Caco-2 (cell line): ENCODE measurements at regions of chr5 and their contacts with region 1.

Region 1: DNA sequence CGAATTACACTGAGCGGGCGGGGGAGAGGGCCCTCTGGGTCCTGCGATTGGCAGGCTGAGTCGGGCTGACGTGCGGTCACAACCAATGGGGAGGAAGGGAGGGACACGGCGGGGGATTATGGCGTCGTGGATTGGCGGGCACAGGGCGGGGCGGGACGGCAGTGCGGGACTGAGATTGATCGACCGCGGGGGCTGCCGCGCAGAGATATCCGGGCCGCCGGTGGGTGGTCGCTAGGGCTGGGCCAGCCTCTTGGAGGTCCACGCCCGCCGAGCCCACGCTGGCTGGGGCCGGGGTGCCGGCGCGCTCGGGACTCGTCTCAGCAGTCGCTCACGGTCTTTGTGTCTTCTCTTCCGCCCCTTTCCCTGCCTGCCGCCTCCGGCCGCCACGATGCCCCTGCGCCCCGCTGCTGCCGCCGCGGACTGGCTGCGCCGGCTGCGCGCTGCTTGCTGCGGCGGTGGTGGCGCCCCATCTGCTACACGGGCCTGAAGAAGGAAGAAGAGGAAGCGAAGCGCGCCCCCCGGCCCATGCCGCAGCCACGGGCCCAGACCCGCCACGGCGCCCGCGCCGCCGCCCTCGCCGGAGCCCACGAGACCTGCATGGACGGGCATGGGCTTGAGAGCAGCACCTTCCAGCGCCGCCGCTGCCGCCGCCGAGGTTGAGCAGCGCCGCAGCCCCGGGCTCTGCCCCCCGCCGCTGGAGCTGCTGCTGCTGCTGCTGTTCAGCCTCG is at the start of gene RGMB:
- DNase-seq: peak; percentile 98 to 99
- H3K4me3 ChIP-seq: peak within 1 kb of the TSS; percentile 95
- H3K4me3 Mint-ChIP-seq: peak within 1 kb of the TSS; percentile 82
- H3K27ac Mint-ChIP-seq: peak within 1 kb of the TSS; percentile 87
- H3K4me1 ChIP-seq: peaks cover 14% of the 10 kb centered on the region
- H3K4me1 Mint-ChIP-seq: peaks cover 9% of the 10 kb centered on the region
- H3K27me3 ChIP-seq: no peaks in the 10 kb centered on the region
- H3K27me3 Mint-ChIP-seq: no peaks in the 10 kb centered on the region
- CTCF ChIP-seq: no peak
- total RNA-seq, gene RGMB: 16.4 and 17.8 TPM in 2 replicates

Region 2: DNA sequence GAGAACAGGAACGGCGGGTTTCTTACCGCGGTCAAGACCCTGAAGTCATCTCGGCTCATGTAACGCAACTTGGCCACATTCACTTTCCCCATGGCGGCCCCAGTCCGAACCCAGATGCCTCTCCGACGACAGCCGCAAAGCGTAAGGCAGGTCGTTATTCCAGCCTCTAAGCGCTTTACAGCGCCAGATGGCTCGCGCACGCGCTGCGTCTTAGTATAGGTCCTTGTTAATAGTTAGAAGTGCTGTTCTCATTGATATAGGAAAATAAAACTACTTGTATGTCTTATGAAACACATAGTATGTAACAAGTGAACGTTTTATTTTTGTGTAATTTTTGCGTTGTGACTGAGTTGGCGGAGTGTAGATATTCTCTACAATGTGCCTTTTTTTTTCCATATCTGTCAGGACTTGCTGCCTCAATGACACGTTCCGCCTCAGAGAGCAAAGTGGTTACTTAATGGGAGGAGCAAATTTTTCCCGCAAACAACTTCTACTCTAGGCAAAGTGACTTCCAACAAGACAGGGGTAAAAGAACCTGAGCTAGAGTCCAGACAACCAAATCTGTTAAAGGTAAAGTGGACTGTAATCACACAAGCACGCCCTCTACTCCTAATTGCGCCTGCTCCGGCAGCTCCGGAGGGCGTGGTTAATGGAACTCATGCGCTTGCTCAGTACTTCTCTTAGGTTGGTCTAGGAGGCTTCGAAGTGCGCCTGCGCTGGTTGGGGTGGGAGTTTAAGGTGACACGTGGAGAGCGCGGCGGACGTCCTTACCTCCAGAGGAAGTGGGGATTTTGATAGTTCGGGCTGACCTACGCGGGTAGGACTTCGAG is 1590.3 kb before region 1 on chr5 and contains the start of gene RIOK2:
- CTCF ChIA-PET with region 1: no interaction called
- POLR2A ChIA-PET with region 1: no interaction called
- intact Hi-C with region 1: loop called (anchors 5 kb)
- DNase-seq: peak; percentile 96 to 98
- H3K4me3 ChIP-seq: peak within 1 kb of the TSS; percentile 87
- H3K4me3 Mint-ChIP-seq: peak within 1 kb of the TSS; percentile 74
- H3K27ac Mint-ChIP-seq: peak within 1 kb of the TSS; percentile 98
- H3K4me1 ChIP-seq: 0 out of 2 replicates have a peak, but pooled peaks cover 13% of the 10 kb centered on the region
- H3K4me1 Mint-ChIP-seq: peaks cover 25% of the 10 kb centered on the region
- H3K27me3 ChIP-seq: no peaks in the 10 kb centered on the region
- H3K27me3 Mint-ChIP-seq: no peaks in the 10 kb centered on the region
- CTCF ChIP-seq: no peak
- total RNA-seq, gene RIOK2: 36.3 and 38.7 TPM in 2 replicates

Region 3: DNA sequence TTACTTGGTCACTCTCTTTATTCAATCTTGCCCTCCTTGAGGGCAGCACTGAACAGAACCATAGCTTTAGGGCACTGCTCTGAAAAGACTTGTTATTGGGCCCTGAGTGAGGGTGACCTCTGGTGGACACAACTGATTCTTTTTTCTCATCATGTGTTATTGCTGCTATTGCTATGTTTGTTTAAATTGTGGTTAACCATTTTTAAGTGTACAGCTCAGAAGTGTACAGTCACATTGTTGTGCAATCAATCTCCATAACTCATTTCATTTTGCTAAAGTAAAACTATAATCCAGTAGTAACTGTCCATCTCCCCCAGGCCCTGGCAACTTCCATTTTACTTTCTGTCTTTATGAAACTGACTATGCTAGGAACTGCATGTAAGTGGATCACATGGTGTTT is 1239.5 kb before region 1 on chr5:
- CTCF ChIA-PET with region 1: interaction called, 3 read pairs
- POLR2A ChIA-PET with region 1: no interaction called
- intact Hi-C with region 1: loop called (anchors 5 kb)
- DNase-seq: peak; percentile 47 to 62
- H3K4me3 ChIP-seq: no peak overlapping the region
- H3K4me3 Mint-ChIP-seq: no peak overlapping the region
- H3K27ac Mint-ChIP-seq: no peak overlapping the region
- H3K4me1 ChIP-seq: no peaks in the 10 kb centered on the region
- H3K4me1 Mint-ChIP-seq: no peaks in the 10 kb centered on the region
- H3K27me3 ChIP-seq: no peaks in the 10 kb centered on the region
- H3K27me3 Mint-ChIP-seq: no peaks in the 10 kb centered on the region
- CTCF ChIP-seq: peak; percentile 65 to 72

Region 4: GRCh38 chr5:98428806-98429205 is 344.8 kb before region 1 on chr5:
- CTCF ChIA-PET with region 1: no interaction called
- POLR2A ChIA-PET with region 1: no interaction called
- intact Hi-C with region 1: no loop called
- DNase-seq: no peak
- H3K4me3 ChIP-seq: no peak overlapping the region
- H3K4me3 Mint-ChIP-seq: no peak overlapping the region
- H3K27ac Mint-ChIP-seq: no peak overlapping the region
- H3K4me1 ChIP-seq: no peaks in the 10 kb centered on the region
- H3K4me1 Mint-ChIP-seq: no peaks in the 10 kb centered on the region
- H3K27me3 ChIP-seq: no peaks in the 10 kb centered on the region
- H3K27me3 Mint-ChIP-seq: no peaks in the 10 kb centered on the region
- CTCF ChIP-seq: no peak

Region 5: DNA sequence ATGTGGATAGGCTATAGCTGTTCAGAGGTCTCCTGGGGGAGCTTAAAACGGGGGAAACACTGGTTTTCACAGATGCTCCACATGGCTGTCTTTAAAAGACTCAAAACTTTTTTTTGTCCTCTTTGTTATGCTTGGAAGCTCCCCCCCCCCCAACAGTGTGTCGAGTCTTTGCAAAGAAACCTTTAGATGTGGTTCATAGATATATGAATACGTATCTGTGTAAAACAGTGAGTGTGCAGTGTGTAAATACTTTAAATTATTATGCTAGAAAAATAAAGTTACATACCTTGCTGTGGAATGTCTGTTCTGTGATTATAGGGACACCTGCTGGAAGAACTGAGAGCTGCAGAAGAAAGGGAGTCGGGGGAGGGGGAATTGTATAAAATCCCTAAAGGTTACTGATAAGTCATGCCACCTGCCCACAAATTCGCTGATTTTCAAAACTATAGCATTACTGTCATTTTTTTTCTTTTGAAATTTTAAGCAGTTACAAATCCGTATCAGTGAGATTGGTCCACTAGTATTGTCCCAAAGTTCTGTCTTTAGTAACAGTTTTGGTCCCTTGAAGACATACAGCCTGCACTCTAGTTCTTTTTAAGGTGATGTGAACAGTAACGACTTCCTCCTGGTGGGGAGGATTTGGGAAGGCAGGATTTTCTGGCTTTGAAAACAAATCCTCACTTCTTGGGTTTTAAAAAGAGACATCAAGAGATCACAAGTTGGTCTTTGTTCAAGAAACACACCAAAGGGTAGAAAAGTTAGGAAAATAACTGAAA is 22.8 kb after region 1 on chr5:
- CTCF ChIA-PET with region 1: interaction called, 20 read pairs
- POLR2A ChIA-PET with region 1: interaction called, 3 read pairs
- intact Hi-C with region 1: loop called (anchors 1 kb)
- DNase-seq: peak; percentile 62 to 71
- H3K4me3 ChIP-seq: no peak overlapping the region
- H3K4me3 Mint-ChIP-seq: peak overlapping the region; percentile 17
- H3K27ac Mint-ChIP-seq: peak overlapping the region; percentile 62
- H3K4me1 ChIP-seq: no peaks in the 10 kb centered on the region
- H3K4me1 Mint-ChIP-seq: peaks cover 7% of the 10 kb centered on the region
- H3K27me3 ChIP-seq: no peaks in the 10 kb centered on the region
- H3K27me3 Mint-ChIP-seq: no peaks in the 10 kb centered on the region
- CTCF ChIP-seq: peak; percentile 65 to 86

Region 6: GRCh38 chr5:98928873-98929696 is 155.5 kb after region 1 on chr5 and contains the start of gene CHD1:
- CTCF ChIA-PET with region 1: no interaction called
- POLR2A ChIA-PET with region 1: no interaction called
- intact Hi-C with region 1: loop called (anchors 2 kb)
- DNase-seq: peak; percentile 96
- H3K4me3 ChIP-seq: peak within 1 kb of the TSS; percentile 83
- H3K4me3 Mint-ChIP-seq: peak within 1 kb of the TSS; percentile 79
- H3K27ac Mint-ChIP-seq: peak within 1 kb of the TSS; percentile 98
- H3K4me1 ChIP-seq: 0 out of 2 replicates have a peak, but pooled peaks cover 2% of the 10 kb centered on the region
- H3K4me1 Mint-ChIP-seq: no peaks in the 10 kb centered on the region
- H3K27me3 ChIP-seq: no peaks in the 10 kb centered on the region
- H3K27me3 Mint-ChIP-seq: no peaks in the 10 kb centered on the region
- CTCF ChIP-seq: no peak
- total RNA-seq, gene CHD1: 51.1 and 52.5 TPM in 2 replicates